Prostate gland (tissue), 2 donors: ENCODE measurements at regions of chr9 and their contacts with region 1.

Region 1: GRCh38 chr9:33816327-33817252 is at the start of gene UBE2R2:
- DNase-seq: peak; percentile 89
- H3K4me3 ChIP-seq: peak within 1 kb of the TSS; percentile 88 to 95
- H3K27ac ChIP-seq: peak within 1 kb of the TSS; percentile 99
- H3K4me1 ChIP-seq: no peaks in the 10 kb centered on the region
- H3K27me3 ChIP-seq: no peaks in the 10 kb centered on the region
- CTCF ChIP-seq: peak in 1 of 4 experiments; percentile 13
- POLR2A ChIP-seq: peak; percentile 65
- total RNA-seq, gene UBE2R2: 25.6 to 42.7 TPM

Region 2: DNA sequence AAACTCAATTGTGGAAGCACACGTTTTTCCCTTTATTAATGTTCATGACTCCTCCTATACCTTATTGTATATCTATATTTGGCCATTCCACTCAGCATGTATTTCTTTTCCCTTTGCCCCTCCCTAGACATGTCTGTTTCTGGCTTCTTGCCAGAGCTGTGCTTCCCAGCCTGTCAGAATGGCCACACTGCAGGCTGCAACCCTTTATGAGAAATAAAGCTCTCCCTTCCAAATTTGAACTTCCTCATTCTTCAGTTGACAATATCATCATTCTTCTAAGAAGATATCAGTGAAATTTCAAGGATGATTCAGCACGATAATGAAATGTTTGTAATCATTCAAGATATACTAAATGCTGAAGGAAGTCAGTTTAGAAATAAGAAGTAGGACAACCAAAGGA is 128.8 kb before region 1 on chr9:
- intact Hi-C with region 1: no loop called
- DNase-seq: no peak
- H3K4me3 ChIP-seq: no peak overlapping the region
- H3K27ac ChIP-seq: no peak overlapping the region
- H3K4me1 ChIP-seq: no peaks in the 10 kb centered on the region
- H3K27me3 ChIP-seq: no peaks in the 10 kb centered on the region
- CTCF ChIP-seq: no peak
- POLR2A ChIP-seq: no peak

Region 3: GRCh38 chr9:33852216-33852826 is 35.7 kb after region 1 on chr9:
- intact Hi-C with region 1: loop called (anchors 2 kb)
- DNase-seq: peak; percentile 81
- H3K4me3 ChIP-seq: no peak overlapping the region
- H3K27ac ChIP-seq: peak overlapping the region in 1 of 2 donors; percentile 31
- H3K4me1 ChIP-seq: peaks cover 19% of the 10 kb centered on the region
- H3K27me3 ChIP-seq: no peaks in the 10 kb centered on the region
- CTCF ChIP-seq: peak; percentile 46 to 76 (median 71)
- POLR2A ChIP-seq: no peak

Region 4: GRCh38 chr9:33924978-33925797 is 108.6 kb after region 1 on chr9:
- intact Hi-C with region 1: loop called (anchors 10 kb)
- DNase-seq: peak; percentile 51
- H3K4me3 ChIP-seq: no peak overlapping the region
- H3K27ac ChIP-seq: peak overlapping the region in 1 of 2 donors; percentile 27
- H3K4me1 ChIP-seq: no peaks in the 10 kb centered on the region
- H3K27me3 ChIP-seq: no peaks in the 10 kb centered on the region
- CTCF ChIP-seq: peak in 3 of 4 experiments; percentile 39 to 52 (median 52)
- POLR2A ChIP-seq: no peak

Region 5: DNA sequence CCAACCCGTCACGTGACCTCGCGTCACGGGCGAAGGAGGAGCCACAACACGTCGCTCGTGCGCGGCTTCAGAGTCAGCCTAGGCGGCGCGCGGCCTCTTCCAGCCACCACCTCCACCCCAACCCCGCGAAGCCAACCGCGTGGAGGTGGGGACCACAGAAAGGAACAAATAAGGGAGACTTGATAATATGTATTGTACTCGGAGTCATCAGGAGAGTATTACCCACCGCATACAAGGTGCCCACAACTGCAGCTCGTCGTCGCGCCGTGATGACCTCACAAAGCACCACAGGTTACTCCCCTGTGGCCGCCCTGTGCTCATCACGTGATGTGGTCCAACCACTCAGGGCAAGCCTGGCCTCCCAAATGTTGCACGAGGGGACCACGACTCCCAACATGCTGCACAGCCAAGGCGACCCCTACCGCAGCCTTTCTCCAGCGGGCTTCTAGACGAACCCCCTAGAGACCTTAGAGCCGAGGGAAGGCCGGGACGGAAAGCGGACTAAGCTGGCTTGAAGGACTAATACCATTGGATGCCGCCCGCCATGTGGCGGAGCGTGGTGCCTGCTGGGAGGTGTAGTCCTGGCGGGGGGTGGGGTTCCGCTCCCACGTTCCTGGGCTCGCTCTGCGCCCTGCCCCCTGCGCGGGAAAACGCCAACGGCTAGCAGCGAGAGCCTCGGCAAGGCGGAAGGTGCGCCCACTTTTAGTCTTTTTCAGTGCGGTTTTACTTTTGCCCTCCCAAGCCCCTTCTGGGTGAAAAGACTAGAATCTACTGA is 232.5 kb after region 1 on chr9:
- intact Hi-C with region 1: loop called (anchors 10 kb)
- DNase-seq: peak; percentile 98
- H3K4me3 ChIP-seq: peak overlapping the region; percentile 70 to 75
- H3K27ac ChIP-seq: peak overlapping the region; percentile 89 to 96
- H3K4me1 ChIP-seq: peaks cover 10% of the 10 kb centered on the region
- H3K27me3 ChIP-seq: no peaks in the 10 kb centered on the region
- CTCF ChIP-seq: peak in 2 of 4 experiments; percentile 14 to 23
- POLR2A ChIP-seq: peak; percentile 43

Region 6: DNA sequence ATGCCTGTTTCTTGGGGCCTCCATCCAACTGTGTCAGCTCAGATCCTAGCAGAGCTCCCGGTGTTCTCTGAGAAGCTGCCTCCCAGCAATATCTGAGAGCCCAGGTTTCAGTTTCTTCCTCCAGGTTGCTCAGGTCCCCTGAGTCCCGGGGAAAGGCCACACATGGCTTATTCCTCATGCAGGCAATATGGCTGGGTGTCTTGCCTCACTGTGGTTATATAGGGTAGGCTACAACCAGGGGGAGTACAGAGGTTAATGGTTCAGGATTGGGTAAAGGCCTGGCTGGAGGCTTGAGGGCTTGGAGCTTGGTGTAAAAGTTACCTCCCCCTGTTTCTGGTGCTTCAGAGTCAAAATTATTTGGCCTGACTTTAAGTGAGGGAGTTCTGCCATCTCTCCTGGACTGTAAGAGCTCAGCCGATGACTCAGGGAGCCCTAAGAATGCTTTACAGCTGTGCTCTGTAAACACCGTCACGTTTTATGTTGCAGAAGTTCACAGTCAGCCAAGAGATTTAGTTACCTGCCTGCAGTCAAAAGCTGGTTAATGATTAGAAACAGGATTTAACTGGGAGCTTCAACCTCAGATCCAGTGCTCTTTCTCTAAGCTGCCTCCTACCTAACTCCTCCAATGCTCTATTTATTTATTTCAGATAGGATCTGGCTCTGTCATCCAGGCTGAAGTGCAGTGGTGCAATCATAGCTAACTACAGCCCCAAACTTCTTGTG is 256.4 kb after region 1 on chr9:
- intact Hi-C with region 1: loop called (anchors 5 kb)
- DNase-seq: peak; percentile 82
- H3K4me3 ChIP-seq: no peak overlapping the region
- H3K27ac ChIP-seq: peak overlapping the region; percentile 71 to 73
- H3K4me1 ChIP-seq: peaks cover 9% of the 10 kb centered on the region
- H3K27me3 ChIP-seq: no peaks in the 10 kb centered on the region
- CTCF ChIP-seq: no peak
- POLR2A ChIP-seq: no peak